ENCODE measurements at regions of chr18 and their contacts with region 1.

Region 1: DNA sequence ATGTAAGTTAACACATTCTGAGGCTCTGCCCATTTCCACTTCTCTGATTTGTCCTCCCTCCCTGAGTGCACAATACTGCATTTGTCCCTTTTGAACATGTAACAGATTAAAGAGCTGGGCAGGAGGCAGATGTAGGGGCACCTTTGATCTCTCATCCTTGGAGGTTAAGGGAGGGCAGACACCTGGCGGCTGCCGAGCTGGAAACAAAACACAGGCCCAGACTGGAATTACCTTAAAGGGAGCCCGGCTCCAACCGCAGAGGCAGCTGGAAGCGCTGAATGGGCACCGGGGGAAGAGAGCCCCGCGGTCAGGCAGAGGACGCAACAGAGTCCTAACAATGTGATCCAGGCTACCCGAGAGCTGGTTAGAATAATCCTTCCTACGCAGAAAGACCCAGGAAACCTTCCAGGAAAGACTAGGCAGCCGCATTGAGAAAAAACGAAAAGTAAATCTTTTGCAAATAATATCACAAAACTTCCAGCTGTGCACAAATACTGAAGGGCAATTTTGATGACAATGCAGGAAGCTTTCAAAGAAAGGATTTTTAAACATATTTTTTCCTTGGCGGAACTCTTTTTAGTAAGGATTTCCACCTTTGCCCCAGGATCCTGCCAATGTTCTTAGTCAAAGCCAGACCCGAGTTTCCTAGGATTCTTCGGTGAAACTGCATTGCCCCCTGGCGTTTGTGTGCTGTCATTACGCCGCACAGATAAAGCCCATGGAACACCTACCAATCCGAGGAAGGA is 216.0 kb downstream of the TGIF1 start:
- DNase-seq: peak; percentile 94
- ATAC-seq: peak; percentile 94
- H3K4me3 ChIP-seq: peak overlapping the region; percentile 3; the same call in 1 of the 2 replicates
- H3K27ac ChIP-seq: peak overlapping the region; percentile 48
- H3K4me1 ChIP-seq: peaks cover 8% of the 10 kb centered on the region
- H3K27me3 ChIP-seq: no peaks in the 10 kb centered on the region
- CTCF ChIP-seq: peak; percentile 95

Region 2: GRCh38 chr18:3281456-3282400 is 384.2 kb before region 1 on chr18:
- CTCF ChIA-PET with region 1: interaction called, 12 read pairs
- POLR2A ChIA-PET with region 1: no interaction called
- intact Hi-C with region 1: loop called (anchors 1 kb)
- DNase-seq: peak; percentile 96
- ATAC-seq: peak; percentile 64
- H3K4me3 ChIP-seq: no peak overlapping the region
- H3K27ac ChIP-seq: no peak overlapping the region
- H3K4me1 ChIP-seq: peaks cover 27% of the 10 kb centered on the region
- H3K27me3 ChIP-seq: no peaks in the 10 kb centered on the region
- CTCF ChIP-seq: peak; percentile 87

Region 3: GRCh38 chr18:3454365-3455089 is 211.4 kb before region 1 on chr18:
- CTCF ChIA-PET with region 1: interaction called, 3 read pairs
- POLR2A ChIA-PET with region 1: interaction called, 4 read pairs
- intact Hi-C with region 1: loop called (anchors 1 kb)
- DNase-seq: peak; percentile 76
- ATAC-seq: no peak
- H3K4me3 ChIP-seq: peak overlapping the region; percentile 96
- H3K27ac ChIP-seq: peak overlapping the region; percentile 95
- H3K4me1 ChIP-seq: peaks cover 46% of the 10 kb centered on the region
- H3K27me3 ChIP-seq: no peaks in the 10 kb centered on the region
- CTCF ChIP-seq: peak; percentile 83

Region 4: DNA sequence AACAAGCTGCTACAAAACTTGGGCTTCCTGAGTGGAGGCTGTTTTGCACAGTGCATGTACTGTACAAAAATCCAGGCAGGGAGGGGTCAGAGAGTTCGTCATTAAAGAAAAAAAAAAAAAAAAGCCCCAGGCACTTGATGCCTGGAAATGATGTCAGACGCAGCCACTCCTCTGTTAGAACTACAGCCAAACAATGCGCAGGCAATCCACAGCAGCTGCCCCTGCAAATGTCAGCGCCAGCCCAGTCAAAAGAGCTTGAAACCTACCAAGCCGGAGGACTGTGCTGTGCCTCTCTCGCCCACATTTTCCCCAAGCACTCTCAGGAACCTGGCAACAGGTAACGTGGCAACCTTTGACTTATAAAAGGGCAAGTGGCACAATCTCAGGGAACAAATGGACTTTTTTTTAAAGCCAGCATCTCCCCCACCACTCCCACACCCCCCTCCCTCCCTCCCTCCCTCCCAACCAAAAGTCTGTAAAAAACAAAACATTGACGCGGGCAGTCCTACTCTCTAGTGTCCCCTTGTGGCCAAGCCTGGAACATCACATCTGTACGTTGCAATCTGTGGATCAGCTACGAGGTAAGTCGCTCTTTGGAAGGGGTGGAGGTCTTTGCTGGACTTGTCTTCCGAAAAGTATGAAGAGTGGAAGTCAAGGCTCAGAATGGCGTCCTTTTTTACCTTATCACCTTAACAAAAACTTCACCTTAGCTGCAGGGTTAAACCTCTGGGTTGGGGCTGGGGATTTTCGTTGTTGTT is 71.9 kb before region 1 on chr18:
- CTCF ChIA-PET with region 1: interaction called, 24 read pairs
- POLR2A ChIA-PET with region 1: interaction called, 8 read pairs
- intact Hi-C with region 1: loop called (anchors 1 kb)
- DNase-seq: peak; percentile 94
- ATAC-seq: peak; percentile 50
- H3K4me3 ChIP-seq: peak overlapping the region; percentile 60
- H3K27ac ChIP-seq: peak overlapping the region; percentile 99
- H3K4me1 ChIP-seq: peaks cover 45% of the 10 kb centered on the region
- H3K27me3 ChIP-seq: no peaks in the 10 kb centered on the region
- CTCF ChIP-seq: peak; percentile 81

Region 5: DNA sequence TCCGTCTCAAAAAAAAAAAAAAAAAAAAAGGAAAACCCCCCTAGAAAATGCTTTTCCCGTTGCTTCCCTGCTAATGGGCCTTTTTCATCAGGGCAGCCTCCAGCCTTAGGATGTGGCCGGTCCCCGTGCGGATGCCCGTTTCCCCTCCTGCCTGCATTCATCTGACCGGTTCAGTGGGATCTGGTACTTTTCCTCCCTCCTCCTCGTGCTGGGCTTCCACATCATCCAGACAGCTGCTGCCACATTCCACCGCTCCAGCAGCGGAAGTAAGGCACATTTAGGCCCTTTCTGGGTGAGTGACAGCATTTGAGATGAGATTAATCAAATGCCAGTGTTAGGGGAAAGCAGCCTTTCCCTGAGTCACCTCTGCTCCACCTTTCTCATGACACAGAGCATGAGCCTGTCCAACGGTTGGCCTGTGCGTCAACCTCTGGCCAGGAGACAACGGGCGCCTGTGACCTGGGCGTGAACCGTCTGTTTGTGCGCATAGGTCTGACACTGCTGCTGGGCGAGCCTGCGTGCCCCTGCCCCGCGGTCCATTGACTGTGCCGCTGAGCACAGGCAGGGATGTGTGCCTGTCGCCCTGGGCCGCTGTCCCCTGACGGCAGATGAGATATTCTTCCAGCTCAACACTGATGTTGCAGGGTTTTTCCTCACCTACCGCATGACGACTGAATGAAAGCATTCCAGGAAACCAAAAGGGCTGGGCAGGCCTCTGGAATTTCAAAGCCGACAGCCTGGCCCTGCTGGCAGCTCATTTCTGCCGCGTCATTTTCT is 42.0 kb before region 1 on chr18:
- CTCF ChIA-PET with region 1: interaction called, 7 read pairs
- POLR2A ChIA-PET with region 1: interaction called, 6 read pairs
- intact Hi-C with region 1: loop called (anchors 5 kb)
- DNase-seq: peak; percentile 98
- ATAC-seq: peak; percentile 81
- H3K4me3 ChIP-seq: peak overlapping the region; percentile 53
- H3K27ac ChIP-seq: peak overlapping the region; percentile 98
- H3K4me1 ChIP-seq: peaks cover 50% of the 10 kb centered on the region
- H3K27me3 ChIP-seq: no peaks in the 10 kb centered on the region
- CTCF ChIP-seq: no peak

Region 6: DNA sequence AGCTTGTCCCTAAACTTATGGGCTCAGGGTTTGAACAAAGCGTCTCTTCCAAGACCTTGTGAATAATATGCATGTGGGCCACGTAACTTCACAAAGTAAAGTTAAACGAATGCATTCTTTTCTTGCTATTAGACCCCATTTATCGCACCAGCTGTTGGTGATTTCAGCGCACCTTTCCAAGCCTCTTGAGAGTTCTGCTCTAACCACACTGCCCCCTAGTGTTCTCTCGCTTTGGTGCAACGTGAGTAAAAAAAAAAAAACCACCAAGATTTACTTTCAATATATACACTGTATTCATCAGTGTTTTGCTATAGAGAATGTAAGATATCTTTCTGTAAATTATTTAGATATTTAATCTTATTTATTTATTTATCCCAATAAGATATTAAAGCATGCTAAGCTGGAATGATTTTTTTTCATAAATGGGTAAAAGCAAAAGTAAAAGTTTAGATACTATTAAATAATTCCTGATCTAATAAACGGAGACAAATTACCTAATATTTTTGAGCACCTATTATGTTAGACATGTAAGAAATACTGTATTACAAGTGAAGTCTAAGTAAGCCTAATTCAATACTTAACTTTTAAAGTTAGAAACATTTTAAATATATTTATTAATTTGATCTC is 329.6 kb after region 1 on chr18:
- CTCF ChIA-PET with region 1: no interaction called
- POLR2A ChIA-PET with region 1: no interaction called
- intact Hi-C with region 1: loop called (anchors 1 kb)
- DNase-seq: peak; percentile 69
- ATAC-seq: 0 out of 2 replicates have a peak, but pooled peaks have one; percentile 20
- H3K4me3 ChIP-seq: no peak overlapping the region
- H3K27ac ChIP-seq: no peak overlapping the region
- H3K4me1 ChIP-seq: no peaks in the 10 kb centered on the region
- H3K27me3 ChIP-seq: no peaks in the 10 kb centered on the region
- CTCF ChIP-seq: peak; percentile 85

Measured in PC-3 (cell line).